ENCODE measurements at regions of chr11 and their contacts with region 1.

Region 1: DNA sequence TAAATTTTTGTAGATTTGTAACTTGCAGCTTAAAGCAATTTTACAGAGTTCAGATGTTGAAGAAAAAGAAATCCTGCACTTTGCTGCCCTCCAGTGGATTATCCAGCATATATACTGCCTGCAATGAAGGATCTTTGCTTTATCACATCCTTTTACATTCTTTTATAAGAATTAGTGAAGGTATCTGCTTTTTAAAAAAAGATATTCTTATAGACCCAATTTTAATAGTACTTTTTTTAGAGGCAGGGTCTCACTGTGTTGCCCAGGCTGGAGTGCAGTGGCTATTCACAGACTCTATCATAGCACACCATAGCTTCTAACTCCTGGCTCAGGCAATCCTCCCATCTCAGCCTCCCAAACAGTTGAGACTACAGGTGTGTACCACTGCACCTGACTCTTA is 60.7 kb downstream of the TTC17 start:
- DNase-seq: no peak
- H3K4me3 ChIP-seq: no peak overlapping the region
- CTCF ChIP-seq: peak; percentile 55

Region 2: GRCh38 chr11:43447151-43447550 is 27.7 kb after region 1 on chr11:
- CTCF ChIA-PET with region 1: interaction called, 11 read pairs
- POLR2A ChIA-PET with region 1: no interaction called
- DNase-seq: no peak
- H3K4me3 ChIP-seq: no peak overlapping the region
- CTCF ChIP-seq: no peak

Region 3: DNA sequence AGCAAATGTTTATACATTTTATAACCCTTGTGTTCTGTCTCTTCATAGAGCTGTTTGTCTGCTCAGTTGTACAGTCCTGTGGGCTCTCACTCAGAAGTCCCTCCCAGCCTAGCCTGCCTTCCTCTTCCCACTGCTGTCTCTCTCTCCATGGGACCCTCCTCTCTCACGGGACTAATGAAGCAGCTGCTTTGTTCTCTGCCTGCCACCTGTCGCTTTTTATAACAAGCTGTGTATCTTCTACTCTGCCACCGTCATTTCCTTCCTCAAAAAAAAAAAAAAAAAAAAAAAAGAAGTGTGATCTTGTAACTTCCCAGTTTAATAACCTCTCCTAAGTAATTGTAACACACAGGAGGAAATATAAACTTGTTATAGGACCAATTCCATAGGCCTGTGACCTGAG is 369.0 kb after region 1 on chr11:
- CTCF ChIA-PET with region 1: no interaction called
- POLR2A ChIA-PET with region 1: no interaction called
- DNase-seq: no peak
- H3K4me3 ChIP-seq: no peak overlapping the region
- CTCF ChIP-seq: no peak